IMR-90 (cell line): ENCODE measurements at regions of chr16 and their contacts with region 1.

Region 1: GRCh38 chr16:84952335-84953189 is 58.8 kb downstream of the ZDHHC7 start:
- DNase-seq: peak; percentile 82
- ATAC-seq: peak; percentile 97
- H3K4me3 ChIP-seq: no peak overlapping the region
- H3K27ac ChIP-seq: no peak overlapping the region
- H3K4me1 ChIP-seq: peaks cover 7% of the 10 kb centered on the region; the same call in 1 of the 2 replicates
- H3K27me3 ChIP-seq: no peaks in the 10 kb centered on the region
- CTCF ChIP-seq: peak; percentile 84
- POLR2A ChIP-seq: 0 out of 2 replicates have a peak, but pooled peaks have one; percentile 25
- RAD21 ChIP-seq: peak; percentile 83

Region 2: DNA sequence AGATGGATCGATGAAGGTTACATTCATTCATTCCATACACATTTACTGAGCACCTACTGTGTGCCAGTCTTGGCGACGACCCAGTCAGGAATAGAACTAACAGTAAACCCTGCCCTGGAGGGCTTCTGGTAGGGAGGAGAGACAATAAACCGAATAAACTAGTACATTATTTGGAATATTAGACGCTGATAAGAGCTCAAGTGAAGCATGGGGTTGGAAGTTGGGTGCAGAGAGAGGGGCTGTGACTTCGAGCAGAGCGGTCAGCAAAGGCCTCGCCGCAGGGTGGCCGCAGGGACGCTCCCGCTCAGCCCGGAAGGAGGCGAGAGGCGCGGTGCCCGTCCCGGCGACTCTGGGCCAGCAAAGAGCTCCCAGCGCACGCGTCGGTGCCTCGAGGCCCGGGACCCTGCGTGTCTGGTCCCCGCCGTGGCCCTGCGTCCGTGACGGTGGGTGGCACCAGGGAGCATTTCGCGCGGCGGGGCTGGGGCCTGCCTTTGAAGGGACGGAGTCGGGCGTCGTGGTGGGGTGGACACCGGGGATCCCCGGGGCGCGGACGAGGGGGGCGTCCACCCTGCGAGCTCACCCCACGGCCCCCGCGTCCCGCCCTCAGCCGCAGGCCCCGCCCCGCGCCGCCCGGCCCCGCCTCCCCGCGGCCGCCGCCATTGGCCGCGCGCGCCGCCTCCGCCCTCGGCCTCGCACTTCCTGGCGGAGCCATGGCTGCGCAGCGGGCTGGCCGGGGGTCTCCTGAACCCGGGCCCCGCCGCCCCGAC is 304.6 kb before region 1 on chr16 and contains the start of gene KLHL36:
- CTCF ChIA-PET with region 1: no interaction called
- POLR2A ChIA-PET with region 1: no interaction called
- dilution Hi-C with region 1: no loop called
- in situ Hi-C with region 1: loop called (anchors 25 kb)
- intact Hi-C with region 1: no loop called
- DNase-seq: no peak
- ATAC-seq: peak; percentile 93
- H3K4me3 ChIP-seq: peak within 1 kb of the TSS; percentile 64
- H3K27ac ChIP-seq: peak within 1 kb of the TSS; percentile 93
- H3K4me1 ChIP-seq: peaks cover 24% of the 10 kb centered on the region
- H3K27me3 ChIP-seq: no peaks in the 10 kb centered on the region
- CTCF ChIP-seq: no peak
- POLR2A ChIP-seq: peak; percentile 30; the same call in 1 of the 2 replicates
- RAD21 ChIP-seq: no peak
- total RNA-seq, gene KLHL36: 45.9 and 50.3 TPM in 2 replicates

Region 3: DNA sequence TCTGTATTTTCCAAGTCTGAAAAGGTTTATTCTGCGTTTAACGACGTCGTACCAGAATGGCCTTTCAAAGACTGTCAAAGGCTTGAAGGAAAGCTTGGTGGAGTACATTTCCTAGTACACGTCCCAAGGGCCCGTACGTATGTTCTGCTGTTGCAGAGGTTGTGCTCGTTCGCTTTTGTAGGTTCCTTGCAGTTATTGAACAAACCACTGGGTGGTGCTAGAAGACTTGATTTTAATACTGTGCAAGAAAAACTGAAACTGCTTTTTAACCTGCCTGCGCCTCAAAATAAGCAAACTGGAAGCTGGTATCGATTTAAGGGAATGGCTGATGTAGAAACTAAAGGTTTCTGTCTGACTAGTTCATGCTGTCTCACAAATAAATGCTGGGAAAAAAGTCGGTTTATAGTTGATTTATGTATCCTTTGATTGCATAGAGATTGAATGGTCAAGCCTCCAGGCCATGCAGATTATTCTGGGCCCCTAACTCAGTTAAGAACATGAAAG is 198.2 kb before region 1 on chr16:
- CTCF ChIA-PET with region 1: interaction called, 25 read pairs
- POLR2A ChIA-PET with region 1: interaction called, 6 read pairs
- dilution Hi-C with region 1: no loop called
- in situ Hi-C with region 1: no loop called
- intact Hi-C with region 1: loop called (anchors 1 kb)
- DNase-seq: peak; percentile 93
- ATAC-seq: peak; percentile 87
- H3K4me3 ChIP-seq: no peak overlapping the region
- H3K27ac ChIP-seq: peak overlapping the region; percentile 23; the same call in 1 of the 2 replicates
- H3K4me1 ChIP-seq: peaks cover 27% of the 10 kb centered on the region
- H3K27me3 ChIP-seq: no peaks in the 10 kb centered on the region
- CTCF ChIP-seq: peak; percentile 83
- POLR2A ChIP-seq: 0 out of 2 replicates have a peak, but pooled peaks have one; percentile 23
- RAD21 ChIP-seq: peak; percentile 85

Region 4: GRCh38 chr16:84925092-84925772 is 27.3 kb before region 1 on chr16:
- CTCF ChIA-PET with region 1: interaction called, 7 read pairs
- POLR2A ChIA-PET with region 1: no interaction called
- dilution Hi-C with region 1: no loop called
- in situ Hi-C with region 1: no loop called
- intact Hi-C with region 1: loop called (anchors 1 kb)
- DNase-seq: no peak
- ATAC-seq: no peak
- H3K4me3 ChIP-seq: no peak overlapping the region
- H3K27ac ChIP-seq: no peak overlapping the region
- H3K4me1 ChIP-seq: peaks cover 8% of the 10 kb centered on the region; the same call in 1 of the 2 replicates
- H3K27me3 ChIP-seq: no peaks in the 10 kb centered on the region
- CTCF ChIP-seq: peak; percentile 63
- POLR2A ChIP-seq: no peak
- RAD21 ChIP-seq: peak; percentile 75

Region 5: DNA sequence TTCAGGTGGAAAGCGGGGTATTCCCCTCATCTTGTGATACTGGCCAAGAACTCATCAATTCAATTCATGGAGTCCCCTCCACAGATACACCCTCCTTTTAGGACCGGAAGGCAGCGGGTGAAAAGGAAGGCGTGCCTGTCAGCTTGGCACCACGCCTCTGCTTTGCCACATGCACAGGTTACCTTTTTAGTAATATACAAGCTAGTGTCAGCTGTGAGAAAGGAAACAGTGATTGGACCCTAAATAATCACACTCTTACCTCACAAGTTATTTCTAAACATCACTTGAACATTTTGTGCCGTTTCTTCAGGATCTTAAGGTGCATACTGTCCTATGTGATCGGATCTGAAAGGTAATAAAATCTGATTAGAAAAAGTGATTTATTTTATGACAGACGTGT is 43.1 kb after region 1 on chr16:
- CTCF ChIA-PET with region 1: no interaction called
- POLR2A ChIA-PET with region 1: no interaction called
- dilution Hi-C with region 1: no loop called
- in situ Hi-C with region 1: no loop called
- intact Hi-C with region 1: no loop called
- DNase-seq: no peak
- ATAC-seq: no peak
- H3K4me3 ChIP-seq: no peak overlapping the region
- H3K27ac ChIP-seq: peak overlapping the region; percentile 77
- H3K4me1 ChIP-seq: peaks cover 43% of the 10 kb centered on the region
- H3K27me3 ChIP-seq: no peaks in the 10 kb centered on the region
- CTCF ChIP-seq: no peak
- POLR2A ChIP-seq: no peak
- RAD21 ChIP-seq: no peak